ENCODE measurements at regions of chr6 and their contacts with region 1.

Region 1: GRCh38 chr6:157034436-157035230 is 257.5 kb downstream of the ARID1B start:
- DNase-seq: no peak
- H3K4me3 Mint-ChIP-seq: peak overlapping the region; percentile 3
- H3K27ac Mint-ChIP-seq: no peak overlapping the region
- H3K4me1 Mint-ChIP-seq: peaks cover 20% of the 10 kb centered on the region
- H3K27me3 Mint-ChIP-seq: no peaks in the 10 kb centered on the region

Region 2: GRCh38 chr6:157021344-157021992 is 13.2 kb before region 1 on chr6:
- CTCF ChIA-PET with region 1: interaction called, 7 read pairs
- POLR2A ChIA-PET with region 1: interaction called, 14 read pairs
- DNase-seq: peak; percentile 93
- H3K4me3 Mint-ChIP-seq: peak overlapping the region; percentile 90
- H3K27ac Mint-ChIP-seq: peak overlapping the region; percentile 100
- H3K4me1 Mint-ChIP-seq: peaks cover 52% of the 10 kb centered on the region
- H3K27me3 Mint-ChIP-seq: no peaks in the 10 kb centered on the region

Region 3: DNA sequence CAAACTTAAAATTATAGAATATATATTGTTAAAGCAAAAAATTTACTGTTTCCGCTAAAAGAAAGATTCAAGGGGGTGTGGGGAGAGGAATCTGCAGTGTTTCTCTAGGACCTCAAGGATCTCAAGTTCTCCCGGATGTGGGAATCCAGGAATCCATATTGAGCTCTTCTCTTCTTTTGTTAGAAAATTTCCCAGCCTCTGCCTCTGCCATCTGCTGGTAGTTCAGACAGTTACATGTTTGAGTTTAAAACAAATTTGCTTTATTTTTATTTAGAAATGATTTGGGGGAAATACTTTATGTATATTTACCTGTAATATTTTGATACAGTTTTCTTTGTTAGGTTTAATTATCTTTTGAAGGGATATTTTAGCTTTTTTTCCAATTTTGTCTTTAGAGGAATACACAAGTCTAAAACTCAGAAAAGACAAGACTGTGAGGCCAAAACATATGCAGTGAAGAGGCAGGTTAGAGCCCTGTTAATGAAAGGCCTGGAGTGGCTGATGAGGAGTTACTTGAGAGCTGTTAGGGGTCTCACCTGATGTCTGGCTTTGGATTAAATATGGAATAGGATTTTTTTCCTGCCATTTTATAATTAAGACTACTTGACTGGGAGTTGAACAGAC is 11.3 kb after region 1 on chr6:
- CTCF ChIA-PET with region 1: interaction called, 15 read pairs
- POLR2A ChIA-PET with region 1: interaction called, 4 read pairs
- DNase-seq: no peak
- H3K4me3 Mint-ChIP-seq: no peak overlapping the region
- H3K27ac Mint-ChIP-seq: no peak overlapping the region
- H3K4me1 Mint-ChIP-seq: no peaks in the 10 kb centered on the region
- H3K27me3 Mint-ChIP-seq: no peaks in the 10 kb centered on the region

Region 4: GRCh38 chr6:157184202-157185020 is 149.8 kb after region 1 on chr6:
- CTCF ChIA-PET with region 1: interaction called, 61 read pairs
- POLR2A ChIA-PET with region 1: interaction called, 3 read pairs
- DNase-seq: peak; percentile 74
- H3K4me3 Mint-ChIP-seq: no peak overlapping the region
- H3K27ac Mint-ChIP-seq: peak overlapping the region; percentile 62
- H3K4me1 Mint-ChIP-seq: peaks cover 23% of the 10 kb centered on the region
- H3K27me3 Mint-ChIP-seq: no peaks in the 10 kb centered on the region

Measured in activated CD4-positive, alpha-beta memory T cell treated with anti-CD3 and anti-CD28 coated beads, Interleukin-2, amount 10 ng/mL, durations not matched to agents 7 days and 5 days (primary cell).